Heart left ventricle (tissue), 16 donors: ENCODE measurements at regions of chr17 and their contacts with region 1.

Region 1: DNA sequence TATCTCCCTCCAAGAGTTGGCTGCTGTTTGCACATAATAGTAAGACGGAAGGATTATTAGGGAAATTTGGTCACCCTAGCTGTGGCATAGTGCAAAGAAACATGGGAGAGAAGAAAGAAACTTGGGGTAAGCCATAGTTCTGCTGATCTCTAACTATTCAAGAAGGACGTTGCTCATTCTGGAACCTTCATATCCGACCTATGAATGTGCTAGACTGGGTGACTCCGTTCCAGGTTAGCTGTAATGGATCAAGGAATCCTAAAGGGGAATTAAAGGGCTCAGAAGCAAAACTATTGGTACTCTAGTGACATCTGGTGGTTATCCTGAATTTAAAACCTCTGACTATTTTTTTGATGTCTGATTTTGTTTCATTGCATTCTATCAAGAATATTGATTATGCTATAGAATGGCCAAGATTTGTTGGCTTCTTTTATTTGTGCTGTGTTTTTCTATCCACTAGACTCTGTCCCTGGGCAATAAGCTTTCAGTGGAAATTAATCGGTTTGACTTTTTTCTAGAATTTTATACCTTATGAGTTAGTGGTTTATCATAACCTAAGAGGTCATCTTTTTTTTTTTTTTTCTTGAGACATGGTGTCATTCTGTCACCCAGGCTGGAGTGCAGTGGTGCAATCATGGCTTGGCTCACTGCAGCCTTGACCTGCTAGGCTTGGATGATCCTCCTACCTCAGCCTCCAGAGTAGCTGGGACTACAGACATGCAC is 19.5 kb downstream of the PCTP start:
- DNase-seq: no peak
- ATAC-seq: peak; percentile 42 to 78 (median 49)
- H3K4me3 ChIP-seq: no peak overlapping the region
- H3K27ac ChIP-seq: peak overlapping the region in 1 of 12 donors; percentile 66
- H3K4me1 ChIP-seq: peaks cover 0 to 15% (median 4%) of the 10 kb centered on the region in 12 donors
- H3K27me3 ChIP-seq: no peaks in the 10 kb centered on the region
- CTCF ChIP-seq: peak; percentile 47 to 77 (median 62)
- POLR2A ChIP-seq: no peak

Region 2: GRCh38 chr17:55641676-55642081 is 128.6 kb before region 1 on chr17:
- intact Hi-C with region 1: loop called in 5 of 10 experiments (anchors 5 to 10 kb)
- DNase-seq: peak; percentile 61 to 74 (median 67)
- ATAC-seq: peak in 3 of 4 donors; percentile 56 to 82 (median 71)
- H3K4me3 ChIP-seq: no peak overlapping the region
- H3K27ac ChIP-seq: no peak overlapping the region
- H3K4me1 ChIP-seq: peaks cover 0 to 12% (median 0%) of the 10 kb centered on the region in 12 donors
- H3K27me3 ChIP-seq: peaks cover 0 to 38% (median 0%) of the 10 kb centered on the region in 9 donors
- CTCF ChIP-seq: peak; percentile 42 to 71 (median 57)
- POLR2A ChIP-seq: no peak

Region 3: GRCh38 chr17:55717898-55718735 is 52.2 kb before region 1 on chr17:
- intact Hi-C with region 1: loop called in 5 of 10 experiments (anchors 5 to 10 kb)
- DNase-seq: peak; percentile 63 to 83 (median 68)
- ATAC-seq: peak in 2 of 4 donors; percentile 50 to 52
- H3K4me3 ChIP-seq: no peak overlapping the region
- H3K27ac ChIP-seq: no peak overlapping the region
- H3K4me1 ChIP-seq: peaks cover 0 to 12% (median 4%) of the 10 kb centered on the region in 12 donors
- H3K27me3 ChIP-seq: no peaks in the 10 kb centered on the region
- CTCF ChIP-seq: peak; percentile 70 to 90 (median 82)
- POLR2A ChIP-seq: no peak

Region 4: GRCh38 chr17:55726440-55726839 is 43.9 kb before region 1 on chr17:
- intact Hi-C with region 1: loop called in 1 of 10 experiments (anchors 5 kb)
- DNase-seq: peak in 4 of 5 donors; percentile 58 to 77 (median 68)
- ATAC-seq: peak; percentile 31 to 65 (median 49)
- H3K4me3 ChIP-seq: no peak overlapping the region
- H3K27ac ChIP-seq: peak overlapping the region in 4 of 12 donors; percentile 1 to 78 (median 22)
- H3K4me1 ChIP-seq: peaks cover 0 to 56% (median 24%) of the 10 kb centered on the region in 12 donors
- H3K27me3 ChIP-seq: no peaks in the 10 kb centered on the region
- CTCF ChIP-seq: no peak
- POLR2A ChIP-seq: no peak

Region 5: GRCh38 chr17:55814377-55814776 is 44.1 kb after region 1 on chr17:
- intact Hi-C with region 1: loop called in 2 of 10 experiments (anchors 5 to 10 kb)
- DNase-seq: peak; percentile 41 to 75 (median 55)
- ATAC-seq: peak; percentile 88 to 96 (median 89)
- H3K4me3 ChIP-seq: no peak overlapping the region
- H3K27ac ChIP-seq: peak overlapping the region in 3 of 12 donors; percentile 32 to 62 (median 41)
- H3K4me1 ChIP-seq: peaks cover 0 to 11% (median 0%) of the 10 kb centered on the region in 12 donors
- H3K27me3 ChIP-seq: no peaks in the 10 kb centered on the region
- CTCF ChIP-seq: no peak
- POLR2A ChIP-seq: no peak

Region 6: DNA sequence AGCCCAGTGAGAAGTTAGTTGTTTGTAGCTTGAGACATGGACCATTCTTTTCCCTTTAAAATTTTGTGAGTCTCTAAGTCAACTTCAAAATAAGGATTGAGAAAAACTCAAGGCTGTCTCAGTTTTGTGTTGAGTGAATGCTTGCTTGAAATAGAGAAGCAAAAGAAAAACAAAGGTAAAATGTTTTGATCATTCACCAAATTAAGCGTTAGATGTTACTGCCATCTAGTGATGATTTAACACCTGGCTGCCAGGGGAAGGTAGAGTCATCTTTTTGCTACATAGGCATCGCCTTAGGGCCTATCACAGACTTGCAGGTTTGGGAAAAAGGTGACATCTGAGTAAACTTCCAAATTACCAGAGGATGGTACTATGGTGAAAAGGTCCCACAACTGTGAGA is 54.9 kb after region 1 on chr17:
- intact Hi-C with region 1: loop called in 2 of 10 experiments (anchors 5 to 10 kb)
- DNase-seq: no peak
- ATAC-seq: no peak
- H3K4me3 ChIP-seq: no peak overlapping the region
- H3K27ac ChIP-seq: no peak overlapping the region
- H3K4me1 ChIP-seq: no peaks in the 10 kb centered on the region
- H3K27me3 ChIP-seq: no peaks in the 10 kb centered on the region
- CTCF ChIP-seq: peak in 9 of 12 donors; percentile 8 to 50 (median 39)
- POLR2A ChIP-seq: no peak